ENCODE measurements at regions of chr18 and their contacts with region 1.

Region 1: GRCh38 chr18:3771121-3771971 is 321.4 kb downstream of the TGIF1 start:
- DNase-seq: peak; percentile 81
- H3K4me3 Mint-ChIP-seq: no peak overlapping the region
- H3K27ac Mint-ChIP-seq: no peak overlapping the region
- H3K4me1 Mint-ChIP-seq: peaks cover 14% of the 10 kb centered on the region
- H3K27me3 Mint-ChIP-seq: peaks cover 30% of the 10 kb centered on the region

Region 2: GRCh38 chr18:3869848-3870247 is 98.5 kb after region 1 on chr18:
- CTCF ChIA-PET with region 1: interaction called, 22 read pairs
- DNase-seq: no peak
- H3K4me3 Mint-ChIP-seq: no peak overlapping the region
- H3K27ac Mint-ChIP-seq: no peak overlapping the region
- H3K4me1 Mint-ChIP-seq: no peaks in the 10 kb centered on the region
- H3K27me3 Mint-ChIP-seq: peaks cover 5% of the 10 kb centered on the region

Region 3: GRCh38 chr18:3995476-3996102 is 224.2 kb after region 1 on chr18:
- CTCF ChIA-PET with region 1: interaction called, 46 read pairs
- DNase-seq: peak; percentile 69
- H3K4me3 Mint-ChIP-seq: no peak overlapping the region
- H3K27ac Mint-ChIP-seq: no peak overlapping the region
- H3K4me1 Mint-ChIP-seq: no peaks in the 10 kb centered on the region
- H3K27me3 Mint-ChIP-seq: peaks cover 12% of the 10 kb centered on the region

Region 4: GRCh38 chr18:4068552-4069158 is 297.3 kb after region 1 on chr18:
- CTCF ChIA-PET with region 1: interaction called, 16 read pairs
- DNase-seq: peak; percentile 53
- H3K4me3 Mint-ChIP-seq: no peak overlapping the region
- H3K27ac Mint-ChIP-seq: no peak overlapping the region
- H3K4me1 Mint-ChIP-seq: no peaks in the 10 kb centered on the region
- H3K27me3 Mint-ChIP-seq: no peaks in the 10 kb centered on the region

Region 5: GRCh38 chr18:4748975-4749374 is 977.6 kb after region 1 on chr18:
- CTCF ChIA-PET with region 1: no interaction called
- DNase-seq: no peak
- H3K4me3 Mint-ChIP-seq: no peak overlapping the region
- H3K27ac Mint-ChIP-seq: no peak overlapping the region
- H3K4me1 Mint-ChIP-seq: no peaks in the 10 kb centered on the region
- H3K27me3 Mint-ChIP-seq: no peaks in the 10 kb centered on the region

Measured in activated naive CD4-positive, alpha-beta T cell treated with anti-CD3 and anti-CD28 coated beads, Interleukin-2, amount 10 ng/mL, durations not matched to agents 7 days and 5 days (primary cell).